ENCODE measurements at regions of chr3 and their contacts with region 1.

Region 1: DNA sequence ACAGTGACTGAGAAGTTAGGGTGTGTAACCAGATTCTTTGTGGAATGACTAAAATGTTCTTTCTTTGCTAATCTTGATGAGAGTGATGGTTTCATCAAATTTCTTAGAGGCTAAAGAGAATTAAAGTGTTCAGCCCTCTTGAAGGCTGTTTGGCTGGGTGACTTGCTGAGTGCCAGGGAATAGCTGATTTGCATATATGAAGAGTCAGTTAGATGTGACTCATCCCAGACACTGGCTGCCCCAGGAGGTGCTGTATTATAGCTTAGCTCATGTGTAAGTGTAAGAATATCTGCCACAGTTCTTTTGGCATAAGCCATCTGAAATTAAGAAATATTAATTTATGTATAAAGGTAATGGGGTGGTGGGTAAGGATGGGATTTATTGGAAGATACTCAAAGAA is 535.1 kb downstream of the NLGN1 start:
- DNase-seq: no peak
- H3K4me3 ChIP-seq: no peak overlapping the region
- H3K27ac ChIP-seq: no peak overlapping the region
- H3K27me3 ChIP-seq: no peaks in the 10 kb centered on the region
- CTCF ChIP-seq: no peak

Region 2: GRCh38 chr3:173599673-173600072 is 333.0 kb before region 1 on chr3:
- CTCF ChIA-PET with region 1: no interaction called
- POLR2A ChIA-PET with region 1: no interaction called
- DNase-seq: no peak
- H3K4me3 ChIP-seq: no peak overlapping the region
- H3K27ac ChIP-seq: no peak overlapping the region
- H3K27me3 ChIP-seq: no peaks in the 10 kb centered on the region
- CTCF ChIP-seq: no peak

Region 3: DNA sequence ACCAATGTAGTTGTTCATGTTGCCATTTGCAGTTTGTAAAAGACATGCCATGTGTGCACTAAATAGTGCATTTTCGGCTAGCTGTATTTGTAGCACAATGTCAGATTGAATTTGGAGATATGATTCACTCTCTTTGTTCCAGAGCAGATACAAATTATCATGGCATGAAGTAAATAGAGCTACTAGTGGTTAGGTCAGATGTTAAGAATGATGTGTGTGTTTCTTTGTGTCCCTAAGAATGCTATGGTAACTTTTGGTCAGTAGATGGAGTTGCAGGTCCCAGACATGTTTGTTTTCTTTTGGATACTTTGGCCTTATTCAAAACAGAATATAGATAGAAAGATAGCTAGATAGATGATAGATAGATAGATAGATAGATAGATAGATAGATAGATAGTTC is 60.7 kb after region 1 on chr3:
- CTCF ChIA-PET with region 1: interaction called, 13 read pairs
- POLR2A ChIA-PET with region 1: no interaction called
- DNase-seq: no peak
- H3K4me3 ChIP-seq: no peak overlapping the region
- H3K27ac ChIP-seq: no peak overlapping the region
- H3K27me3 ChIP-seq: no peaks in the 10 kb centered on the region
- CTCF ChIP-seq: peak; percentile 43

Measured in AG04450 (cell line).